ENCODE measurements at regions of chr13 and their contacts with region 1.

Region 1: GRCh38 chr13:20127577-20128466 is 33.0 kb downstream of the GJA3 start:
- DNase-seq: peak in 1 of 2 experiments; percentile 84
- H3K4me3 ChIP-seq: peak overlapping the region; percentile 47 to 65 (median 58)
- H3K27ac ChIP-seq: no peak overlapping the region
- H3K4me1 ChIP-seq: peaks cover 0 to 7% (median 2%) of the 10 kb centered on the region in 4 experiments; a peak in 4 of 7 replicates
- H3K27me3 ChIP-seq: peaks cover 0 to 20% (median 15%) of the 10 kb centered on the region in 4 experiments; a peak in 6 of 7 replicates
- CTCF ChIP-seq: peak; percentile 39 to 54 (median 50)
- EP300 ChIP-seq: no peak
- POLR2A ChIP-seq: no peak
- RAD21 ChIP-seq: peak; percentile 35 to 47; a peak in 2 of 4 replicates

Region 2: DNA sequence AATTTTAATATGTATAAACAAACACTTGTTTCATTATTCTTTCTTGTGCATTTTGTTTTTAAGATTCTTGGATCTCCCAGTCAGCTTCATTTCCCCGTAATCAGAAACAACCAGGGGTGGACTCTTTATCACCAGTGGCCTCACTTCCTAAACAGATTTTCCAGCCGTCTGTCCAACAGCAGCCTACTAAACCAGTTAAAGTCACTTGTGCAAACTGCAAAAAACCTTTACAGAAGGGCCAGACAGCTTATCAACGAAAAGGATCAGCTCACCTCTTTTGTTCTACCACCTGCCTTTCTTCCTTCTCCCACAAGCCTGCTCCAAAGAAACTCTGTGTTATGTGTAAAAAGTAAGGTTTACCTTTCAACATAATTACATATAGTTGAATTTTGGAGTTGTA is 125.0 kb before region 1 on chr13:
- CTCF ChIA-PET with region 1: no interaction called
- POLR2A ChIA-PET with region 1: no interaction called
- DNase-seq: no peak
- H3K4me3 ChIP-seq: no peak overlapping the region
- H3K27ac ChIP-seq: no peak overlapping the region
- H3K4me1 ChIP-seq: no peaks in the 10 kb centered on the region
- H3K27me3 ChIP-seq: no peaks in the 10 kb centered on the region
- CTCF ChIP-seq: no peak
- EP300 ChIP-seq: no peak
- POLR2A ChIP-seq: no peak
- RAD21 ChIP-seq: no peak

Region 3: GRCh38 chr13:20109037-20109436 is 18.8 kb before region 1 on chr13:
- CTCF ChIA-PET with region 1: interaction called, 12 read pairs
- POLR2A ChIA-PET with region 1: no interaction called
- DNase-seq: no peak
- H3K4me3 ChIP-seq: no peak overlapping the region
- H3K27ac ChIP-seq: no peak overlapping the region
- H3K4me1 ChIP-seq: peaks cover 0 to 5% (median 1%) of the 10 kb centered on the region in 4 experiments; a peak in 2 of 7 replicates
- H3K27me3 ChIP-seq: no peaks in the 10 kb centered on the region
- CTCF ChIP-seq: no peak
- EP300 ChIP-seq: no peak
- POLR2A ChIP-seq: no peak
- RAD21 ChIP-seq: no peak

Region 4: GRCh38 chr13:20144141-20144850 is 16.5 kb after region 1 on chr13:
- CTCF ChIA-PET with region 1: interaction called, 12 read pairs
- POLR2A ChIA-PET with region 1: no interaction called
- DNase-seq: peak in 1 of 2 experiments; percentile 39
- H3K4me3 ChIP-seq: no peak overlapping the region
- H3K27ac ChIP-seq: no peak overlapping the region
- H3K4me1 ChIP-seq: no peaks in the 10 kb centered on the region; a peak in 1 of 7 replicates
- H3K27me3 ChIP-seq: peaks cover 0 to 4% (median 2%) of the 10 kb centered on the region in 4 experiments; a peak in 3 of 7 replicates
- CTCF ChIP-seq: no peak
- EP300 ChIP-seq: no peak
- POLR2A ChIP-seq: no peak
- RAD21 ChIP-seq: no peak

Region 5: DNA sequence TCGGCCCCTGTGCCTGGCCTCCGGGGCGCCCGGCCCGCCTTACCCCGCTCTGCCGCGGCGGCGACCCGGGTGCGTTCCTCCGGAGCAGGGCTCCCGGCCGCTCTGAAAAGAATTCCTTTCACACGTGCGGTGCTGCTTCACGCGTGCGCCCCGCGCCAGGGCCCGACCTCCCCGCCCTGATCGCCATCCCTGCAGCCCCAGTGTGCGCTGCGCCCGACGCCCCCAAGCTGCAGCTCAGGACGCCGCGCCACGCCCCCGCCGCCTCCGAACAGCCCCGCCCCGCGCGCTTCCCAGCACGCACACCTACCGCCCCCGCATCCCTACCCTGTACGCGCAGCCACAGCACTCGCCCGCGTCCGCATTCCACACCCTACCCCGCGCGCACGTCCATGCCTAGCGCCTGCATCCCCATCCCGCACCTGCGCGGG is 33.0 kb after region 1 on chr13 and contains the start of gene GJA3:
- CTCF ChIA-PET with region 1: interaction called, 11 read pairs
- POLR2A ChIA-PET with region 1: no interaction called
- DNase-seq: peak in 1 of 2 experiments; percentile 81
- H3K4me3 ChIP-seq: peak within 1 kb of the TSS; percentile 45 to 70 (median 55)
- H3K27ac ChIP-seq: no peak within 1 kb of the TSS
- H3K4me1 ChIP-seq: no peaks in the 10 kb centered on the region
- H3K27me3 ChIP-seq: peaks cover 23 to 41% (median 36%) of the 10 kb centered on the region in 4 experiments
- CTCF ChIP-seq: no peak
- EP300 ChIP-seq: no peak
- POLR2A ChIP-seq: no peak
- RAD21 ChIP-seq: no peak
- total RNA-seq, gene GJA3: 0.48 and 0.60 TPM in 2 replicates

Measured in H1 (cell line).